ENCODE measurements at regions of chr7 and their contacts with region 1.

Region 1: GRCh38 chr7:51045319-51046102 is 262.8 kb upstream of the GRB10 start:
- DNase-seq: peak; percentile 82
- H3K4me3 Mint-ChIP-seq: peak overlapping the region; percentile 43
- H3K27ac Mint-ChIP-seq: peak overlapping the region; percentile 48
- H3K4me1 Mint-ChIP-seq: peaks cover 36% of the 10 kb centered on the region
- H3K27me3 Mint-ChIP-seq: no peaks in the 10 kb centered on the region
- CTCF ChIP-seq: no peak

Region 2: DNA sequence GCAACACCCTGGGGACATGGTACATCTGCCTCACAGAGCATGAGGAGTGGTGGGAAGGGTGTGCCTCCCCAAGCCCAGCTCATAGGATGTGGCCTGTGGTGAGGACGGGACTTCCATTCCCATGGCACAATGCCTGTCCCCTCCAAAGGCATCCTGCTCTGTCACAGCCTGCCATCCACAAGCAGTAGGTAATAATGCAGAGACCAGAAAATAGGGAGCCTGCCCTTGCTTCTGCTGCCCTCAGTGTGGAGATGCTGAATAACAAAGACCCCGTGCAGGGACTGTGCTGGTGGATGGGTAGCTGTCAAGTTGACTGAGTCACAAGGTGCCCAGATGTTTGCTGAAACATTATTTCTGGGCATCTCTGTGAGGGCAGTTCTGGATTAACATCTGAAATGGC is 62.9 kb before region 1 on chr7:
- CTCF ChIA-PET with region 1: no interaction called
- intact Hi-C with region 1: loop called (anchors 5 kb)
- DNase-seq: peak; percentile 54
- H3K4me3 Mint-ChIP-seq: no peak overlapping the region
- H3K27ac Mint-ChIP-seq: no peak overlapping the region
- H3K4me1 Mint-ChIP-seq: peaks cover 6% of the 10 kb centered on the region
- H3K27me3 Mint-ChIP-seq: no peaks in the 10 kb centered on the region
- CTCF ChIP-seq: no peak

Region 3: DNA sequence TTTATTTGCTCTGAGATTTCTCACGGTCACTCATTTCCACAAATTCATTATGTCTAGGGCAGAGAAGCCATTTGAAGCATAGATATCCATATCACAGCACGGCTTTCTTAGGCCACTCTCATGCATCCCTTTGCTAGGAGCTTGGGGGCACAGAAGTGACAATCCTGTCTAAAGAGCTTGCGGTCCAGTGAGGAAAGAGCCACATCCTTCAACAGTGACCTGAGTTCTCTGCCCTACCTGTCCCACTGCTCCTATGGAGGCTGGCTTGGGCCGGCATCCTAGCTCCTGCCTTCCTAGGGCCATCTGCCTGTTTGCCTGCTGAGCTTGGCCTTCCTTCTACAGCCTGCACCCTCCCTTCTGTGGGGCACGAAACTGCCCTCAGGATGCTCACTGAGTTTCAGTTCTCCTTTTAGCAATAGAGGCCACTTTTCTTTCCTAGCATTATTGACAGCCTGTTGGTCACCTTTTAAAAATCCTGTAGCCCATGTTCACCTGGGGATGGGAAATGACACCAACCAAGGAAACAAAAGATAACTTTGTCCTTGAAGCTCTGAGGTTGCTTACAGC is 50.7 kb before region 1 on chr7:
- CTCF ChIA-PET with region 1: no interaction called
- intact Hi-C with region 1: no loop called
- DNase-seq: no peak
- H3K4me3 Mint-ChIP-seq: no peak overlapping the region
- H3K27ac Mint-ChIP-seq: no peak overlapping the region
- H3K4me1 Mint-ChIP-seq: peaks cover under 1% of the 10 kb centered on the region
- H3K27me3 Mint-ChIP-seq: no peaks in the 10 kb centered on the region
- CTCF ChIP-seq: no peak

Region 4: DNA sequence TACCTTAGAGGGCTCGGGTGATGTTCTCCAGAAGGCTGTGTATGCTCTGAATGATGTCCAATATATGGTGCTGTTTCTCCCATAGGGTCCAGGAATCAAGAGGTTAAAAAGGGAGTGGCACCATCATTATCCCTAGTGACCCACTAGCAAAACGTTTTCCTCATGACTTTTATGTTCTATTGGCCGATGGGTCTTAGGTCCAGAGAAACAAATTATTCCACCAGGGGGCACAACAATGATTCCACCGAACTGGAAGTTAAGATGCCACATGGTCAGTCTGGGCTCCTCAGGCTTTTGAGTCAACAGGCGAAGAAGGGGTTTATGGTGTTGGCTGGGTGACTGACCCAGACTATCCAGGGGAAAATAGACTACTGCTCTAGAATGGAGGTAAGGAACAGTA is 15.0 kb after region 1 on chr7:
- CTCF ChIA-PET with region 1: no interaction called
- intact Hi-C with region 1: no loop called
- DNase-seq: no peak
- H3K4me3 Mint-ChIP-seq: no peak overlapping the region
- H3K27ac Mint-ChIP-seq: no peak overlapping the region
- H3K4me1 Mint-ChIP-seq: no peaks in the 10 kb centered on the region
- H3K27me3 Mint-ChIP-seq: no peaks in the 10 kb centered on the region
- CTCF ChIP-seq: peak; percentile 27

Region 5: DNA sequence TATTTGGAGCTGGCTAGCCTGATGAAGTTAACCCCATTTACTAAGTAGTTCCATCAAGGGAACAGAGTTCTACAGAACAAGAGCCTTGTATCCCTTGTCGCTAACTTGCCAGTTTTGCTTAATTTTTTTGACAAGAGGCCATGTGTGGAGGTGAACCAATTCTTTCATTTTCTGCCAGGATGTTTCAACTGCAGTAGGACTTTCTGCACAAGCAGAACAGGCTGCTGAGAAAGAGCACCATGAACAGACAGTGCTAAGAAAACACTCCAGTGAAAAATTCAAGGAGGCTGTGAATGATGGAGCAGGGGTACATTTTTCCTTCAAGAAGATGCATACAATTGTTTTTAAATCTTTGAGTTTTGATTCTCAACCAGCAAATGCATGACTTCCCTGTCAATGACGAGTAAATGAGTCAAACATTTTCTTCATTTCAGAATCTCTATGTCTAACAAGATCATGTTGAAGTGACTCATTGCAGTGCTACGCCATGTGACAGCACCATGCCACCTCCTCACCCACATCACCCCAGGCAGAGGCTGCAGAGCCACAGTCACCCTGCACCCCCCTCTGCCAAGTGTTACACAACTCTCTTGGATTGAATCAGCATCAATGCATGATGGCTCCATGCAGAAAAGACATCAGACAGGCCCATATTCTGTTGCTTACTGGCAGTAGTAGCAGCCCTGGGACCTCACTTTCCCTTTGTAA is 78.0 kb after region 1 on chr7:
- CTCF ChIA-PET with region 1: no interaction called
- intact Hi-C with region 1: no loop called
- DNase-seq: peak; percentile 91
- H3K4me3 Mint-ChIP-seq: peak overlapping the region; percentile 12
- H3K27ac Mint-ChIP-seq: peak overlapping the region; percentile 73
- H3K4me1 Mint-ChIP-seq: peaks cover 22% of the 10 kb centered on the region
- H3K27me3 Mint-ChIP-seq: no peaks in the 10 kb centered on the region
- CTCF ChIP-seq: no peak